H1 (cell line): ENCODE measurements at regions of chr7 and their contacts with region 1.

Region 1: GRCh38 chr7:24819916-24820689 is 62.8 kb upstream of the GSDME start:
- DNase-seq: peak in 1 of 2 experiments; percentile 82
- H3K4me3 ChIP-seq: no peak overlapping the region
- H3K27ac ChIP-seq: no peak overlapping the region
- H3K4me1 ChIP-seq: no peaks in the 10 kb centered on the region
- H3K27me3 ChIP-seq: no peaks in the 10 kb centered on the region
- CTCF ChIP-seq: peak; percentile 50 to 94 (median 91)
- EP300 ChIP-seq: no peak
- POLR2A ChIP-seq: no peak
- RAD21 ChIP-seq: peak; percentile 92 to 95

Region 2: DNA sequence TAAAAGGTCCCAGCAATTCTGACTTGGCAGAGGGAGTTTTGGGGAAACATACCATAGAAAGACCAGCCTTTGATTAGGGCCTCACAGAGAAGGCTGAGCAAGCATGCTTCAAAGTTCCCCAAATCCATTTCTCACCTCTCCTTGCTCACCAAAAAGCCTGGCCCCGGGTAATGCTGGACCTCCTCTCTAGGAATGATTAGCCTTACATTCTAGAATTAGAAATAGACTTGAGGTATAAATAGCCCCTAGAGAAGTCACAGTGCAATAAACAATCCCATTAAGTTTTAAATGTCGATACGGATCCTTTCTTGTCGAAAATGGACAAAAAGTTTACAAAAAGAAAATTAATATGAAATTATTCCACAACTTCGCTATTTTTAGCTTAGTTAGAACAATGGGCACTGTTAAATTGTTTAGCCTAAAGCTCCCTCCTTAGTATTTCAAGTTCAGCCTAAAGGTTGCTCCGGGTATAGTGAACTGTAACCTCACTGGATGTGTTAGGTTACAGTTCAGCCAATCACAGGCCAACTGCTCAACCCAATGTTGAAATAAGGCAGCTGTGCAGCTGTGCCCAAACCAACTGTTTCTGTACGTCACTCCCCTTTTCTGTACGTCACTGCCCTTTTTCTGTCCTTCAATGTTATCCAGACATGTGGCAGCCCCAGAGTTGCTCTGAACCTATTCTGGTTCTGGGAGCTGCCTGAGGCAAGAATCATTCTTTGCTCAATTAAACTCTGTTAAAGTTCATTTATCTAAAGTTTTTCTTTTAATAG is 54.9 kb before region 1 on chr7:
- CTCF ChIA-PET with region 1: no interaction called
- POLR2A ChIA-PET with region 1: no interaction called
- DNase-seq: no peak
- H3K4me3 ChIP-seq: no peak overlapping the region
- H3K27ac ChIP-seq: no peak overlapping the region
- H3K4me1 ChIP-seq: no peaks in the 10 kb centered on the region
- H3K27me3 ChIP-seq: peaks cover 0 to under 1% (median 0%) of the 10 kb centered on the region in 4 experiments; a peak in 1 of 7 replicates
- CTCF ChIP-seq: no peak
- EP300 ChIP-seq: no peak
- POLR2A ChIP-seq: no peak
- RAD21 ChIP-seq: no peak

Region 3: DNA sequence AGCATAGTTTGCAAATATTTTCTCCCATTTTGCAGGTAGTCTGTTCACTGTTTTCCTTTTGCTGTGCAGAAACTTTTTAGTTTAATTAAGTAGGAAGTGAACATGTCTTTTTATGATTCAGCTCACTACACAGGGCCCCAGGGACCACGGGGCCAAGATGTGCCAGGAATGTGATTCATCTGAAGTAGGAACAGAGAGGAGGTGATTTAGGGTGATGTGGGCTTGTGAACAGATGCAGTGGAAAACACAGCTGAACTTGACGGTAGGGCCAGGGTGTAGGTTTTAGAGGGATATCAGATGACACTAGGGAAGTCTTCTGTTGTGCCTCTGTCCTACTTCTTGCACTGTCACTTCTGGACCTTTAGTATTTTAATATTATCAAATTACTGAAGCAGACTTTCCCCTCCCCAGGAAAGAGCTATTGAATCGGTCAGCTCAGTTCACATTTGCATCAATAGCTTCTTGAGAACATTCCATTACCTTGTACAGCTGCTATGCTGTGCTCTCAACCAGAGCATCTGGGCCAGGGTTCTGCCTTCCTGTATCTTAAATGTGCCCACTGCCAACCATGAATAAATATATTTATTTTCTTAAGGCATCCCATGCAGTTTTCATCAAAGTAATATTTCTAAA is 63.0 kb after region 1 on chr7:
- CTCF ChIA-PET with region 1: interaction called, 29 read pairs
- POLR2A ChIA-PET with region 1: no interaction called
- DNase-seq: no peak
- H3K4me3 ChIP-seq: no peak overlapping the region
- H3K27ac ChIP-seq: no peak overlapping the region
- H3K4me1 ChIP-seq: peaks cover 3 to 17% (median 10%) of the 10 kb centered on the region in 4 experiments; a peak in 5 of 7 replicates
- H3K27me3 ChIP-seq: no peaks in the 10 kb centered on the region
- CTCF ChIP-seq: no peak
- EP300 ChIP-seq: no peak
- POLR2A ChIP-seq: no peak
- RAD21 ChIP-seq: no peak

Region 4: DNA sequence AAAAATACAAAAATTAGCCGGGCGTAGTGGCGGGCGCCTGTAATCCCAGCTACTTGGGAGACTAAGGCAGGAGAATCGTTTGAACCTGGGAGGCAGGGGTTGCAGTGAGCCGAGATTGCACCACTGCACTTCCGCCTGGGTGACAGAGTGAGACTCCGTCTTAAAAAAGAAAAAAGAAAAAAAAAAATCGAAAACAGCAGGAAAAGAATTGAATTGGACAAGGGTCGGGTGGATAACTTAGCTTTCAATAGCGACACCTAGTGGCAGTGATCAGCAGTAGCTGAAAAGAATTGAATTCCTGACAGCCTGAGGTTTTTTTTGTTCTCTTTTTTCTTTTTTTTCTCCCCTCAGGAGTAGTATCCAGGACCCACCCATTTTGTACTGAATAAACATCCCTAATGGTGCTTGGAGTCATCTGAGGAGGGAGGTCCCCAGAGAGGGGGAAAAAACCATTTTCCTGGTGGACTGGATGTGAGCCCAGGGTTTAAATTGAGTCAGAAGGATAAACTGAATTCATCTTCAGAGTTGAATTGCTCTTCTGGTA is 249.9 kb after region 1 on chr7:
- CTCF ChIA-PET with region 1: interaction called, 13 read pairs
- POLR2A ChIA-PET with region 1: no interaction called
- DNase-seq: peak in 1 of 2 experiments; percentile 53
- H3K4me3 ChIP-seq: no peak overlapping the region
- H3K27ac ChIP-seq: no peak overlapping the region
- H3K4me1 ChIP-seq: no peaks in the 10 kb centered on the region; a peak in 2 of 7 replicates
- H3K27me3 ChIP-seq: no peaks in the 10 kb centered on the region
- CTCF ChIP-seq: peak in 2 of 3 experiments; percentile 76 to 77; a peak in 3 of 4 replicates
- EP300 ChIP-seq: no peak
- POLR2A ChIP-seq: no peak
- RAD21 ChIP-seq: peak; percentile 81 to 84